Calu3 (cell line): ENCODE measurements at regions of chr1 and their contacts with region 1.

Region 1: GRCh38 chr1:147389532-147390524 is 147.3 kb downstream of the CHD1L start:
- DNase-seq: peak; percentile 32
- H3K4me3 Mint-ChIP-seq: no peak overlapping the region
- H3K27ac Mint-ChIP-seq: no peak overlapping the region
- H3K4me1 Mint-ChIP-seq: no peaks in the 10 kb centered on the region
- H3K27me3 Mint-ChIP-seq: peaks cover 14% of the 10 kb centered on the region
- CTCF ChIP-seq: peak; percentile 68

Region 2: DNA sequence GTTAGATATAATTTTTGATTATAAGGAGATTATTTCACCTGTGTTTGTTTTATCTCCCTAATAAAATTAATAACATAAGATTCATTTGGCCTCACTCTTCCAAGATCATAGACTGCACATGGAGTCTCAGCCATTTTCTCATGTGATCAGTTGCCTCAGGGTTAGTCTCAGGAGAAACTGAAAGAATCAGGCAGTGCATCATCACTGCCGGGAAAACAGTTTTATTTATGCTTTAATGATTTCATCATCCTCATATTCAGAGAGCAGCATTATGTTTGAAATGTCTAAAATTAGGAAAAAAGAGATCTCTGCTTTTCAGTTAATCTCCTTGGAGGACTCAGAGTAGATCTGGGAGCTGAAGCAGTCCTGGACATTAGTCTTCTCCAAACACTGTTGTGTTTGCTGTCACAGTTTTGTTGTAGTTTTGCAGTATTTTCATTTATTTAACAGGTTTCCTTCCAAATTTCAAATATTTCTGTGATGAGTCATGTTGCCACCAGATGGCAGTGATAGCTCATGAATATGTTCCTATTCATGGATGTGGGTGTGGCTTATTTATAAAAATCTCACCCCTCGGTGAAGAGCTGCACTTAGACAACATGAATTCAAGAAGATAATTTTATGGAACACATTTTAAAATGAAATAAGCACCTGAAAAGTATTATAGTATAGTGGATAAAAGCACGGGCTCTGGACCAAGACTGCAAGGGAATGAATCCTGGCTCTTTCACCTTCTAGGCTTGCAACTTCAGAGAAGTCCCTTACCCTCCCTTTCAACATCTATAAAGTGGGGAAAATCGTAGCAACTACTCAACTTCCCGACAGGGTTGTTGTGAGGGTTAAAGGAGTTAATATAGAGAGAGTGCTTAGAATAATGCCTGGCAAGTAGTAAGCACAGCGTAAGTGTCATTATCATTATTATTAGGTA is 116.2 kb before region 1 on chr1:
- CTCF ChIA-PET with region 1: interaction called, 27 read pairs
- intact Hi-C with region 1: loop called (anchors 1 kb)
- DNase-seq: peak; percentile 43
- H3K4me3 Mint-ChIP-seq: no peak overlapping the region
- H3K27ac Mint-ChIP-seq: no peak overlapping the region
- H3K4me1 Mint-ChIP-seq: peaks cover 9% of the 10 kb centered on the region
- H3K27me3 Mint-ChIP-seq: no peaks in the 10 kb centered on the region
- CTCF ChIP-seq: no peak

Region 3: DNA sequence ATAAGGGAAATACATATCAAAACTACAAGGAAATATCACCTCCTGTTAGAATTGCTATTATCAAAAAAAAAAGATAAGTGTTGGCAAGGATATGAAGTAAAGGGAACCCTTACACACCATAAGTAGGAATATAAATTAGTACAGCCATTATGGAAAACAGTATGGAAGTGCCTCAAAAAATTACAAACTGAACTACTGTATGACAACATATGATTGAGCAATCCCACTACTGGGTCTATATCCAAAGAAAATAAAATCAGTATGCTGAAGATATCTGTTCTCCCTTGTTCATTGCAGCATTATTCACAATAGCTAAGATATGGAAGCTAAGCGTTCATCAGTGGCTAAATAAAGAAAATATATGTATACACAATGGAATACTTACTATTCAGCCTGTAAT is 87.6 kb before region 1 on chr1:
- CTCF ChIA-PET with region 1: no interaction called
- intact Hi-C with region 1: loop called (anchors 10 kb)
- DNase-seq: no peak
- H3K4me3 Mint-ChIP-seq: no peak overlapping the region
- H3K27ac Mint-ChIP-seq: no peak overlapping the region
- H3K4me1 Mint-ChIP-seq: no peaks in the 10 kb centered on the region
- H3K27me3 Mint-ChIP-seq: no peaks in the 10 kb centered on the region
- CTCF ChIP-seq: no peak

Region 4: DNA sequence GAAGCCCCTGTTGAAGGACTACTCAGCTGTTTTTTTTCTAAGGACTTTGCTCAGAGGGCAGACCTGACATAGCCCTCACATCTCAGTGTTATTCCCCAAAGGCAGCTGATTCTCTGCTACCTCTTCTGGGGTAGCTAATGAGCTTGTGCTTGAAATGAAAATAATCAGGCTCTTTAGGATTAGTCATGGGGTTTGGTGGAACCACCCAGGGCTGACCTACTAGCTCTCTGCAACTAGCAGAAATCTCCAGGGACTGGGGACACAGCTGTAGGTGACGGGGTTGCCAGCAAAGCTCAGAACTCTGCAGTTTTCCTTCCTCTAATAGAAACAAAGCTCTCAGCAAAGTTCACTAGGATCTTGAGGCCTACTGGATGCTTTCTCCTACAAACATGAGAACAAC is 45.1 kb after region 1 on chr1:
- CTCF ChIA-PET with region 1: no interaction called
- intact Hi-C with region 1: no loop called
- DNase-seq: no peak
- H3K4me3 Mint-ChIP-seq: no peak overlapping the region
- H3K27ac Mint-ChIP-seq: no peak overlapping the region
- H3K4me1 Mint-ChIP-seq: no peaks in the 10 kb centered on the region
- H3K27me3 Mint-ChIP-seq: peaks cover 15% of the 10 kb centered on the region
- CTCF ChIP-seq: no peak